WTC11 (cell line): ENCODE measurements at regions of chr4 and their contacts with region 1.

Region 1: GRCh38 chr4:16916719-16917337 is 18.4 kb upstream of the LDB2 start:
- DNase-seq: peak; percentile 89
- ATAC-seq: peak; percentile 76
- H3K4me3 Mint-ChIP-seq: no peak overlapping the region
- H3K27ac Mint-ChIP-seq: peak overlapping the region; percentile 83
- H3K4me1 Mint-ChIP-seq: peaks cover 48% of the 10 kb centered on the region
- H3K27me3 Mint-ChIP-seq: no peaks in the 10 kb centered on the region
- CTCF ChIP-seq: peak; percentile 98

Region 2: GRCh38 chr4:16667464-16667863 is 249.4 kb before region 1 on chr4:
- CTCF ChIA-PET with region 1: no interaction called
- POLR2A ChIA-PET with region 1: no interaction called
- DNase-seq: no peak
- ATAC-seq: no peak
- H3K4me3 Mint-ChIP-seq: no peak overlapping the region
- H3K27ac Mint-ChIP-seq: no peak overlapping the region
- H3K4me1 Mint-ChIP-seq: peaks cover 17% of the 10 kb centered on the region
- H3K27me3 Mint-ChIP-seq: no peaks in the 10 kb centered on the region
- CTCF ChIP-seq: no peak

Region 3: GRCh38 chr4:16764622-16765021 is 152.2 kb before region 1 on chr4:
- CTCF ChIA-PET with region 1: interaction called, 15 read pairs
- POLR2A ChIA-PET with region 1: no interaction called
- DNase-seq: peak; percentile 57
- ATAC-seq: peak; percentile 86
- H3K4me3 Mint-ChIP-seq: no peak overlapping the region
- H3K27ac Mint-ChIP-seq: no peak overlapping the region
- H3K4me1 Mint-ChIP-seq: peaks cover 38% of the 10 kb centered on the region
- H3K27me3 Mint-ChIP-seq: no peaks in the 10 kb centered on the region
- CTCF ChIP-seq: peak; percentile 50; the same call in 1 of the 2 replicates

Region 4: GRCh38 chr4:16794816-16795445 is 121.9 kb before region 1 on chr4:
- CTCF ChIA-PET with region 1: interaction called, 13 read pairs
- POLR2A ChIA-PET with region 1: no interaction called
- DNase-seq: peak; percentile 84
- ATAC-seq: peak; percentile 81
- H3K4me3 Mint-ChIP-seq: no peak overlapping the region
- H3K27ac Mint-ChIP-seq: peak overlapping the region; percentile 75
- H3K4me1 Mint-ChIP-seq: peaks cover 61% of the 10 kb centered on the region
- H3K27me3 Mint-ChIP-seq: no peaks in the 10 kb centered on the region
- CTCF ChIP-seq: peak; percentile 90

Region 5: GRCh38 chr4:16818005-16818404 is 98.8 kb before region 1 on chr4:
- CTCF ChIA-PET with region 1: interaction called, 13 read pairs
- POLR2A ChIA-PET with region 1: interaction called, 3 read pairs
- DNase-seq: peak; percentile 41
- ATAC-seq: peak; percentile 96
- H3K4me3 Mint-ChIP-seq: 0 out of 2 replicates have a peak overlapping the region, but pooled peaks have one; percentile 40
- H3K27ac Mint-ChIP-seq: peak overlapping the region; percentile 96
- H3K4me1 Mint-ChIP-seq: peaks cover 60% of the 10 kb centered on the region
- H3K27me3 Mint-ChIP-seq: no peaks in the 10 kb centered on the region; the same call in 1 of the 2 replicates
- CTCF ChIP-seq: no peak

Region 6: GRCh38 chr4:16897991-16898827 is 18.6 kb before region 1 on chr4 and contains the start of gene LDB2:
- CTCF ChIA-PET with region 1: interaction called, 28 read pairs
- POLR2A ChIA-PET with region 1: no interaction called
- DNase-seq: peak; percentile 74
- ATAC-seq: peak; percentile 82
- H3K4me3 Mint-ChIP-seq: peak within 1 kb of the TSS; percentile 94
- H3K27ac Mint-ChIP-seq: peak within 1 kb of the TSS; percentile 98
- H3K4me1 Mint-ChIP-seq: peaks cover 65% of the 10 kb centered on the region
- H3K27me3 Mint-ChIP-seq: 0 out of 2 replicates have a peak, but pooled peaks cover 3% of the 10 kb centered on the region
- CTCF ChIP-seq: no peak
- total RNA-seq, gene LDB2: 62.4 to 67.4 TPM (median 67.3 TPM) in 3 replicates

Region 7: GRCh38 chr4:17115542-17115941 is 198.7 kb after region 1 on chr4:
- CTCF ChIA-PET with region 1: interaction called, 11 read pairs
- POLR2A ChIA-PET with region 1: no interaction called
- DNase-seq: no peak
- ATAC-seq: peak; percentile 50
- H3K4me3 Mint-ChIP-seq: no peak overlapping the region
- H3K27ac Mint-ChIP-seq: no peak overlapping the region
- H3K4me1 Mint-ChIP-seq: peaks cover 22% of the 10 kb centered on the region
- H3K27me3 Mint-ChIP-seq: no peaks in the 10 kb centered on the region
- CTCF ChIP-seq: no peak